Activated CD4-positive, alpha-beta memory T cell treated with anti-CD3 and anti-CD28 coated beads, Interleukin-2, amount 10 ng/mL, durations not matched to agents 7 days and 5 days (primary cell): ENCODE measurements at regions of chr19 and their contacts with region 1.

Region 1: GRCh38 chr19:5713228-5713627 is 6.7 kb downstream of the LONP1 start:
- DNase-seq: no peak
- H3K4me3 Mint-ChIP-seq: no peak overlapping the region
- H3K27ac Mint-ChIP-seq: no peak overlapping the region
- H3K4me1 Mint-ChIP-seq: peaks cover 18% of the 10 kb centered on the region
- H3K27me3 Mint-ChIP-seq: no peaks in the 10 kb centered on the region

Region 2: DNA sequence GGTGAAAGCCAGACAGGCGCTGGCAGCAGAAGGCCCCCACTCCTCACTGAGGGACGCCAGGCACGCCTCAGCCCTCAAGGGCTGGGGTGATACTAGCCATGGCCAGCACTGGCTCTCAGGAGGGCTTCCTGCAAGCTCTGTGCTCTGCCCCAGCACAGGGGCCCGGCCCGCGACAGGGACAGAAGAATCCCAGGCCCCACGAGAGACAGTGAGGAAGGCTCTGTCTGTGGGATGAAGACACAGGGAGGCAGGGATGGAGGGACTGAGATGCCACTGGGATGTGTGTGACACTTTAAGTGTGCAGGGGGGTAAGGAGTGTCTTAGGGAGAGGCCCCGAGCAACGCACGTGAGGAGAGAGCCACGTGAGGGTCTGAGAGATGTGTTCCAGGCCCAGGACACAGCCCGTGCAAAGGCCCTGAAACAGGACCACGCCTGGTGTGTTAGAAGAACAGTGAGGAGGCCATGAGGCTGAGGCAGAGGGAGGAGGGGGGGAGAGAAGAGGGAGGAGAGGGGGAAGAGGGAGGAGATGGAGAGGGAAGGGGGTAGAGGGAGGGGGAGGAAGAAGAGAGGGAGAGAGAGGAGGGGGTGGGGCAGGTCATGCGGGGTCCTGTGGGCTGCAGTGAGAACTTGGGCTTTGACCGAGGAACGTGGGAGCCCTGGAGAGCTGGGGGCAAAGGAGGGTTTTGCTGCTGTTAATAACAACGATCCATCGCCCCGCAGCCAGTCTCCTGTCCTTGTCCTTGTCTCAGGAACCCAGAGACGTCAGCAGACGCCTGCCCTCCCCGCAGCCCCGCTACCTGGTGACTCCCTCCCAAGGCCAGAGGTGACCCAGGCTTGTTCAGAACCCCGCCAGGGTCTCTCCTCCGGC is 16.0 kb before region 1 on chr19:
- CTCF ChIA-PET with region 1: no interaction called
- POLR2A ChIA-PET with region 1: interaction called, 10 read pairs
- DNase-seq: no peak
- H3K4me3 Mint-ChIP-seq: no peak overlapping the region
- H3K27ac Mint-ChIP-seq: no peak overlapping the region
- H3K4me1 Mint-ChIP-seq: peaks cover 13% of the 10 kb centered on the region
- H3K27me3 Mint-ChIP-seq: no peaks in the 10 kb centered on the region

Region 3: GRCh38 chr19:5738426-5738825 is 25.2 kb after region 1 on chr19:
- CTCF ChIA-PET with region 1: no interaction called
- POLR2A ChIA-PET with region 1: no interaction called
- DNase-seq: no peak
- H3K4me3 Mint-ChIP-seq: no peak overlapping the region
- H3K27ac Mint-ChIP-seq: no peak overlapping the region
- H3K4me1 Mint-ChIP-seq: no peaks in the 10 kb centered on the region
- H3K27me3 Mint-ChIP-seq: peaks cover 3% of the 10 kb centered on the region